IMR-90 (cell line): ENCODE measurements at regions of chr20 and their contacts with region 1.

Region 1: GRCh38 chr20:45934586-45935415 is at the start of gene PCIF1:
- DNase-seq: peak; percentile 98
- ATAC-seq: peak; percentile 84
- H3K4me3 ChIP-seq: peak within 1 kb of the TSS; percentile 85
- H3K27ac ChIP-seq: peak within 1 kb of the TSS; percentile 99
- H3K4me1 ChIP-seq: peaks cover 5% of the 10 kb centered on the region
- H3K27me3 ChIP-seq: no peaks in the 10 kb centered on the region
- CTCF ChIP-seq: no peak
- POLR2A ChIP-seq: peak; percentile 98
- RAD21 ChIP-seq: 0 out of 2 replicates have a peak, but pooled peaks have one; percentile 2
- total RNA-seq, gene PCIF1: 5.4 and 6.1 TPM in 2 replicates

Region 2: DNA sequence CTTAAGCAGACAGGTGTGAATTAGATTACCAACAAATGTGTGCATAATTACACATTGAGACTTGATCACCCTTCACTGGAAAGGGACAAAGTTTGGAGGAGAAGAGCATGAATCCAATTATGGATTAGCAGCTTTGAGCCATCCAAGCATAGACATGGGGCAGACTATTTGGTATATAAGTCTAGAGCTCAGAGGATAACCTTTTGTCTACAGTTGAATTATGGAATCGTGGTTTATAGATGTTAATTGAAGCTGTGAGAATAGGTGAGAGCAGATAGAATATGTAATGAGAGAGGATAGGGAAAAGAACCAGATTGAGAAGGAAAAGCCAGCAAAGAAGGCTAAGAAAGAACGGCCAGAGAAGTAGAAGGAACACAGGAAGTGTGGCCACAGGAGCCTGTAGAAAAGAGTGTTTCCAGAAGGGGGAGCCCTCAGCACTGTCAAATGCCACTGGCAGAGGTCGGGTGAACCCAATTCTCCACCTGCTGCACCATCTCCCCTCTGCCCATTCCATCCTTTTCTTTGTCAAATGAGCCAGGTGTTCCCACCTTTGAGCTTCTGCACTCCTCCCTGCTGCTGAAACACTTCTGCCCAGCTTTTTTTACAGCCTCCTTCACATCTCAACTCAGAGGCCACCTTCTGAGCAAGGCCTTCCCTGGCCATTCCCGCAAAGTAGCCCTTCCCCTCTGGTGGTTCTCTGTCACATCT is 135.7 kb before region 1 on chr20:
- CTCF ChIA-PET with region 1: interaction called, 3 read pairs
- POLR2A ChIA-PET with region 1: no interaction called
- dilution Hi-C with region 1: no loop called
- in situ Hi-C with region 1: no loop called
- intact Hi-C with region 1: loop called (anchors 1 kb)
- DNase-seq: peak; percentile 42
- ATAC-seq: peak; percentile 99
- H3K4me3 ChIP-seq: no peak overlapping the region
- H3K27ac ChIP-seq: no peak overlapping the region
- H3K4me1 ChIP-seq: no peaks in the 10 kb centered on the region
- H3K27me3 ChIP-seq: no peaks in the 10 kb centered on the region
- CTCF ChIP-seq: peak; percentile 73
- POLR2A ChIP-seq: no peak
- RAD21 ChIP-seq: peak; percentile 70

Region 3: GRCh38 chr20:45833030-45833882 is 101.5 kb before region 1 on chr20 and contains the start of gene SNX21:
- CTCF ChIA-PET with region 1: no interaction called
- POLR2A ChIA-PET with region 1: no interaction called
- dilution Hi-C with region 1: no loop called
- in situ Hi-C with region 1: no loop called
- intact Hi-C with region 1: loop called (anchors 10 kb)
- DNase-seq: peak; percentile 94
- ATAC-seq: peak; percentile 91
- H3K4me3 ChIP-seq: peak within 1 kb of the TSS; percentile 94
- H3K27ac ChIP-seq: peak within 1 kb of the TSS; percentile 81
- H3K4me1 ChIP-seq: peaks cover 20% of the 10 kb centered on the region
- H3K27me3 ChIP-seq: no peaks in the 10 kb centered on the region
- CTCF ChIP-seq: no peak
- POLR2A ChIP-seq: no peak; the same call in 1 of the 2 replicates
- RAD21 ChIP-seq: no peak
- total RNA-seq, gene SNX21: 10.0 and 11.1 TPM in 2 replicates

Region 4: GRCh38 chr20:45857114-45857881 is 77.5 kb before region 1 on chr20 and contains the starts of genes ACOT8 and ZSWIM3:
- CTCF ChIA-PET with region 1: no interaction called
- POLR2A ChIA-PET with region 1: no interaction called
- dilution Hi-C with region 1: no loop called
- in situ Hi-C with region 1: no loop called
- intact Hi-C with region 1: loop called (anchors 2 kb)
- DNase-seq: peak; percentile 100
- ATAC-seq: peak; percentile 99
- H3K4me3 ChIP-seq: peak within 1 kb of the TSS; percentile 77
- H3K27ac ChIP-seq: peak within 1 kb of the TSS; percentile 78
- H3K4me1 ChIP-seq: peaks cover 8% of the 10 kb centered on the region; the same call in 1 of the 2 replicates
- H3K27me3 ChIP-seq: no peaks in the 10 kb centered on the region
- CTCF ChIP-seq: no peak
- POLR2A ChIP-seq: 0 out of 2 replicates have a peak, but pooled peaks have one; percentile 18
- RAD21 ChIP-seq: no peak
- total RNA-seq, gene ACOT8: 27.8 and 29.8 TPM in 2 replicates
- total RNA-seq, gene ZSWIM3: 8.1 and 8.6 TPM in 2 replicates

Region 5: GRCh38 chr20:45890985-45891983 is 43.5 kb before region 1 on chr20 and contains the starts of genes CTSA and NEURL2:
- CTCF ChIA-PET with region 1: interaction called, 6 read pairs
- POLR2A ChIA-PET with region 1: no interaction called
- dilution Hi-C with region 1: no loop called
- in situ Hi-C with region 1: no loop called
- intact Hi-C with region 1: loop called (anchors 2 kb)
- DNase-seq: peak; percentile 92
- ATAC-seq: peak; percentile 73
- H3K4me3 ChIP-seq: peak within 1 kb of the TSS; percentile 74
- H3K27ac ChIP-seq: peak within 1 kb of the TSS; percentile 63
- H3K4me1 ChIP-seq: peaks cover 3% of the 10 kb centered on the region; the same call in 1 of the 2 replicates
- H3K27me3 ChIP-seq: no peaks in the 10 kb centered on the region
- CTCF ChIP-seq: no peak
- POLR2A ChIP-seq: no peak; the same call in none of the 2 replicates
- RAD21 ChIP-seq: no peak
- total RNA-seq, gene CTSA: 19.0 and 30.3 TPM in 2 replicates
- total RNA-seq, gene NEURL2: 0.56 and 1.1 TPM in 2 replicates

Region 6: DNA sequence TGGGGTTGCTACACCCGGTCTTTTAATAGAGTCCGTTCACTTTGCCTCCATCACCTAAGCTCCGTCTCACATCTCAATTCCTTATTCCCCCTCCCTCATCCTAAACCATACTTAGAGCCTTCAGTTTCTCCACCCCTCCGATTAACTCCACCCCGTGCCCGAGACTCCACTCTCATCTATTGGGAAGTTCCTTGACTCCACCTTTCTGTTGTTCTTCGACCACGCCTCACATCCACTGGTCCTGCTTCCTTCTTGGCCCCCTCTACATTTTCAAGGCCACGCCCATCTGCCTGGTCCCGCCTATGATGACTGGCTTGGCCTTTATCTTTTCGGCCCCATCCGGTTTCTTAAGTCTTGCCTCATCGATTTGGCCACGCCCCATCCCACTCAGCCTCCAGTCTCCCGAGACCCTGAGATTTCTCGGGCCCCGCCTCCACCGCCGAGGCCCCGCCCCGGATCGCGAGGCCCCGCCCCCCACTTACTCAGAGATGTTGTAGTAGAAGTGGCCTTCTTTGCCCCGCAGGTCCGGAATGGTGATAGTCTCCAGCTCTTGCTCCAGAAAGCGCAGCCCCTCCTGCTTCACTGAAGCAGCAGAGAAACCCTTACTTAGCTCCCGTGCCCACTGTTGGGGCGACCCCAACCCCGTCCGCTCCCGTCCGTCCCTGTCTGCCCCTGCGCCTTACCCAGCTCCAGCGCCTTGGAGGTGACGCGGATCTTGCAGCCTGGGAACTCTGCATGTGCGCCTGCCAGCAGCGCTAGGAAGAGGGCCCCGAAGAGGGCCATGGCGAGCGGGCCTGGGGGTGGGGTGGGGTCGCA is 23.9 kb before region 1 on chr20:
- CTCF ChIA-PET with region 1: no interaction called
- POLR2A ChIA-PET with region 1: interaction called, 8 read pairs
- dilution Hi-C with region 1: no loop called
- in situ Hi-C with region 1: no loop called
- intact Hi-C with region 1: loop called (anchors 1 kb)
- DNase-seq: peak; percentile 100
- ATAC-seq: peak; percentile 93
- H3K4me3 ChIP-seq: peak overlapping the region; percentile 43
- H3K27ac ChIP-seq: peak overlapping the region; percentile 69
- H3K4me1 ChIP-seq: peaks cover 16% of the 10 kb centered on the region
- H3K27me3 ChIP-seq: no peaks in the 10 kb centered on the region
- CTCF ChIP-seq: no peak
- POLR2A ChIP-seq: no peak
- RAD21 ChIP-seq: no peak

Region 7: GRCh38 chr20:47241345-47241781 is 1306.6 kb after region 1 on chr20:
- CTCF ChIA-PET with region 1: no interaction called
- POLR2A ChIA-PET with region 1: interaction called, 14 read pairs
- dilution Hi-C with region 1: no loop called
- in situ Hi-C with region 1: no loop called
- intact Hi-C with region 1: no loop called
- DNase-seq: peak; percentile 99
- ATAC-seq: peak; percentile 93
- H3K4me3 ChIP-seq: no peak overlapping the region
- H3K27ac ChIP-seq: peak overlapping the region; percentile 98
- H3K4me1 ChIP-seq: peaks cover 15% of the 10 kb centered on the region
- H3K27me3 ChIP-seq: no peaks in the 10 kb centered on the region
- CTCF ChIP-seq: no peak
- POLR2A ChIP-seq: no peak
- RAD21 ChIP-seq: no peak